Psoas muscle (tissue), 8 donors: ENCODE measurements at regions of chr9 and their contacts with region 1.

Region 1: DNA sequence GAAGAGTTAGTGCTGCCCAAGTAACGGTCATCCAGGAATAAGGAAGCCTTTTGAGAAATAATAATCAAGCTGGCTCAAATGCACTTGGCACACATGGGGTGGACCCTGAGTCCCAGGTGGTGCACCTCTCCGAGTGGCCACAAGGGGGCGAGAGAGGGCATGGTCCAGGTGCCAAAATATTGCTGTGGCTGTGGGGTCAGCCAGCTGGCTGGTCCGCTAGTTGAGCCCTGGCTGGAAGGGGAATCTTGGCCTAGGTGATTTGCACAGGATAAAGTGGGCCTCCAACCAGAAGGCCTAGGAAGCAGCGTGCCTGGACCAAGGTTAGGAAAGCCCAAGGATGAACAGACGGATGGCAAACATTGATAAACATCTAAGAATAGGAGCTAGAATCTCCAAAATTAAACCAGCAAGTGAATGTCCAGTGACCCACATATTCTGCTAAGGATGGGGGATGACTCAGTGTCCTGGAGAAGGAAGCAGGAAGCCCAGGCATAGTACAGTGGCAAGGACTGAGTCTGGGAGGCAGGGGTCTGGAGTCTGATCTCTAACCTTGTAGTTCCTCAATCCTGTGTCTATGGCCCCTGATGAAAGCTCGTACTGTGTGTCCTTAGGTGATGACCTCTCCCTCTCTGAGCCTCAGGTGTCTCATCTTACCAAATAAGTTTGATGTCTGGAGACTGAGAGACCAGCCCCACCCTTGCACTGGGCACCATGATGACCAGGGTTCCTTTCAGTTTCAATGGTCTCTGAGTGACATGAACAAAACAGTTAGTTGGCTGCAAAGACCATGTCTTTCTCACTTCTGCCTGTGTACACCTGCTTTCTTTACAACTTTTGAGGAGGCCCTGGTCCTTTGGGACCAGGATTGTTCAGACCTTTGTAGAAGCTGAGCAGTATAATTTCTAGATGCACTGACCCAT is 19.2 kb upstream of the SHB start:
- DNase-seq: peak; percentile 76 to 85
- ATAC-seq: peak; percentile 87 to 96 (median 90)
- H3K4me3 ChIP-seq: no peak overlapping the region
- H3K27ac ChIP-seq: peak overlapping the region; percentile 46
- H3K4me1 ChIP-seq: peaks cover 12% of the 10 kb centered on the region
- H3K27me3 ChIP-seq: no peaks in the 10 kb centered on the region
- CTCF ChIP-seq: peak; percentile 98

Region 2: GRCh38 chr9:38133595-38133994 is 45.3 kb after region 1 on chr9:
- intact Hi-C with region 1: no loop called
- DNase-seq: no peak
- ATAC-seq: no peak
- H3K4me3 ChIP-seq: no peak overlapping the region
- H3K27ac ChIP-seq: no peak overlapping the region
- H3K4me1 ChIP-seq: no peaks in the 10 kb centered on the region
- H3K27me3 ChIP-seq: peaks cover 0 to 2% (median 0%) of the 10 kb centered on the region in 3 donors
- CTCF ChIP-seq: no peak

Region 3: GRCh38 chr9:38154501-38155421 is 66.5 kb after region 1 on chr9:
- intact Hi-C with region 1: loop called in 1 of 2 experiments (anchors 5 kb)
- DNase-seq: no peak
- ATAC-seq: no peak
- H3K4me3 ChIP-seq: no peak overlapping the region
- H3K27ac ChIP-seq: no peak overlapping the region
- H3K4me1 ChIP-seq: no peaks in the 10 kb centered on the region
- H3K27me3 ChIP-seq: no peaks in the 10 kb centered on the region
- CTCF ChIP-seq: no peak

Region 4: DNA sequence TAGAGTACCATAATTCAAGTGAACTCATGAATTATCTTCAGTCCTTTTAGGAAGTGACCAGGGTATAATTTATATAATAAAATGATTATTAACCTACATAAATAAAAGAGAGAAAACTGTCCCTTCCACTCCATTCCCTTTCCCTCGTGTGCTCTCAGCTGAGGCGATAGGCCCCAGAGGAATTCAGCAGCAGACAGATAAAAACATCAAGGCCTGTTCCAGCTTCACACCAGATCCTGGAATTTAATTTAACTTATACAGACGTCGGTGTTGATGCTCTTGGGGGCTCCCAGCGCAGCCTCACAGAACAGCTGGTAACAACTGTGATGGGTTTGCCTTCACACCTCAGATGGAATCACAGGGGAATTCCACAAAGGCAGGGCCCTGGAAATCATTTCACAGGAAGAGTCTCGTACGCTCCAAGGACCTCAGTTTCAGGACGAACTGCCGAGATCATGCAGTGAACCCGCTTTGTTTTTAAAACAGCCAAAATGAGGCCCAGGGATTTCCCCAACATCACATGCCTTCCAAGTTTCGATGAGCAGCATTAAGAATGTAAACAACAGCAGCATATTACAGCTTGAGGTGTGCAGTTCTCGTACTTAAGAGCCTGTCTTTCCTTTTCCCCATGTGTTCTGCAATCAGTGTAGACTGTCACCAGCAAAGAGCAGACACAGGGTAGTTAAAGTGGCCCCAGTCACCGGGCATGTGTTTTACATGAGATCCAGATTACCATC is 230.7 kb after region 1 on chr9:
- intact Hi-C with region 1: no loop called
- DNase-seq: no peak
- ATAC-seq: no peak
- H3K4me3 ChIP-seq: no peak overlapping the region
- H3K27ac ChIP-seq: no peak overlapping the region
- H3K4me1 ChIP-seq: no peaks in the 10 kb centered on the region
- H3K27me3 ChIP-seq: peaks cover 0 to 7% (median 0%) of the 10 kb centered on the region in 3 donors
- CTCF ChIP-seq: no peak

Region 5: GRCh38 chr9:38362852-38363593 is 274.8 kb after region 1 on chr9:
- intact Hi-C with region 1: loop called in 1 of 2 experiments (anchors 2 kb)
- DNase-seq: peak in 1 of 2 donors; percentile 28
- ATAC-seq: peak; percentile 75 to 86 (median 79)
- H3K4me3 ChIP-seq: no peak overlapping the region
- H3K27ac ChIP-seq: no peak overlapping the region
- H3K4me1 ChIP-seq: no peaks in the 10 kb centered on the region
- H3K27me3 ChIP-seq: no peaks in the 10 kb centered on the region
- CTCF ChIP-seq: peak; percentile 70